Activated B cell treated with CpG ODN at 0.5 μM for 24 hours (primary cell): ENCODE measurements at regions of chr4 and their contacts with region 1.

Region 1: GRCh38 chr4:172202480-172203076 is 389.4 kb downstream of the GALNTL6 start:
- DNase-seq: no peak
- ATAC-seq: no peak
- H3K4me3 Mint-ChIP-seq: no peak overlapping the region
- H3K27ac Mint-ChIP-seq: no peak overlapping the region
- H3K4me1 Mint-ChIP-seq: peaks cover 1% of the 10 kb centered on the region
- H3K27me3 Mint-ChIP-seq: no peaks in the 10 kb centered on the region
- CTCF ChIP-seq: no peak

Region 2: DNA sequence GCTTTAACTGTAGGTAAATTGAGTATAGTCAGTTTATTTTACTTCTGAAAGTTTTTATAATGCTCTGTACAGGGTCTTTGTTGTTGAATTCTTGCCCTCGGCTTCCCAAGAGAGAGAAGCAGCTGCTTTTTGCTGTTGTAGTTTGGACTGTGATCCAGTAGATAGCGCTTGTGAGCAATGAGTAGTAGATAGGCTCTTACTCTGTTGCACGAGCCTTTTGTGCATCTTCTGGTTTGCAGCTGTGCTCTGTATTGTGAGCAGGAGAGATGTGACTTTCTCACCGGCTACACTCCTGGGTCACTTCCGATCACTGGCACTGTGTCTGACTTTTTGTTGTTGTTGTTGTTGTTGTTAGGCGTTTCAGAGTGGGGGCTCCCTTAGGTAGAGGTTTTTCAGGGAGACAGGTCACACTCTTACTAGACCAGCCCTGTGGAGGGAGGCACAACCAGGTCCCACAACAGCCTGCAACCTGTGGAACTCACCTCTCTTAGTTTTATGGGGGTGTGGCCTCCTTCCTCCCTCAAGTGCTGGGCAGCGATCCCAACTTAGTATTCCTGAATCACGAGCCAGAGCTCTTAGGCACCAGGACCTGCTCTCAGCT is 1211.5 kb before region 1 on chr4:
- CTCF ChIA-PET with region 1: interaction called, 4 read pairs
- POLR2A ChIA-PET with region 1: no interaction called
- intact Hi-C with region 1: loop called (anchors 2 kb)
- DNase-seq: no peak
- ATAC-seq: no peak
- H3K4me3 Mint-ChIP-seq: no peak overlapping the region
- H3K27ac Mint-ChIP-seq: no peak overlapping the region
- H3K4me1 Mint-ChIP-seq: no peaks in the 10 kb centered on the region
- H3K27me3 Mint-ChIP-seq: no peaks in the 10 kb centered on the region
- CTCF ChIP-seq: no peak

Region 3: GRCh38 chr4:171846232-171846631 is 356.3 kb before region 1 on chr4:
- CTCF ChIA-PET with region 1: no interaction called
- POLR2A ChIA-PET with region 1: no interaction called
- intact Hi-C with region 1: loop called (anchors 10 kb)
- DNase-seq: no peak
- ATAC-seq: no peak
- H3K4me3 Mint-ChIP-seq: no peak overlapping the region
- H3K27ac Mint-ChIP-seq: no peak overlapping the region
- H3K4me1 Mint-ChIP-seq: no peaks in the 10 kb centered on the region
- H3K27me3 Mint-ChIP-seq: no peaks in the 10 kb centered on the region
- CTCF ChIP-seq: no peak